ENCODE measurements at regions of chr1 and their contacts with region 1.

Region 1: DNA sequence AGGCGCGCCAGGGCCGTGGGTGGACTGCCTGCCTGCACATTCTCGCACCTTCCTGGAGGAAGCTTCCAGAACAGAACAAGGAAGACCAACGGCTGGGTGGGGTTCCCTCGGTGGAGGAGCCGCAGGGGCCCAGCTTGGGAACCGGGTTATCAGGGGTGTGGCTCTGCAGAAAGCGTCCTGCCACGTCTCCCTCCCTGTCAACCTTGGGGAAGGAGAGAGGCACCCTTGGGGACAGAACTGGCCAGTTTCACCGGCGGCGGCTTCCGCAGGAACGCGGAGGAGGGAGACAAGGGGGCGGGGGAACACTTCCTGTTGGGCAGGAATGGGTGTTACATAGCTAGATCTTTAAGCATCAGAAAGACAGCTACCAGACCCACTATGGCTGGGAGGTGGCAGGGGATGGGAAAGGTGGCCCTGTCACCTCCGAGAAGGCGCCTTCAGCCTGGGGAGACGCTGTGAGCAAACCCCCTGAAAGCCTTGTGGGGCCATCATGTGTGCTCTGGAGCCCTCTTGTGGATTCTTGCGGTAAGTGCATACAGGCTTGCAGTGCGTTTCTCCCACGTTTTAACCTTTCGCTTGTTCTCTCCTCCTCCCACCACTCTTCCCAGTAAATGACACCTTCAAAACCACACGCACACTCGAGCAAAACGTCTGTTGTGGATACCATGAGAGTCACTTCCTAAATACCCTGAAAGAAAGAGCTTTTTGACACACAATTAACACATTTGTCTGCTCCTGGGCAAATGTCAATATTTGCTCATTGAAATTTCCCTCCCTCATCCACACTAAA is 3.8 kb upstream of the PLEKHA6 start:
- DNase-seq: peak; percentile 62
- H3K4me3 Mint-ChIP-seq: peak overlapping the region; percentile 58
- H3K27ac Mint-ChIP-seq: peak overlapping the region; percentile 82
- H3K4me1 Mint-ChIP-seq: peaks cover 40% of the 10 kb centered on the region
- H3K27me3 Mint-ChIP-seq: peaks cover 17% of the 10 kb centered on the region

Region 2: GRCh38 chr1:203861379-203862184 is 501.9 kb before region 1 on chr1 and contains the start of gene SNRPE:
- intact Hi-C with region 1: loop called (anchors 1 kb)
- DNase-seq: peak; percentile 96
- H3K4me3 Mint-ChIP-seq: peak within 1 kb of the TSS; percentile 100
- H3K27ac Mint-ChIP-seq: peak within 1 kb of the TSS; percentile 98
- H3K4me1 Mint-ChIP-seq: peaks cover 25% of the 10 kb centered on the region
- H3K27me3 Mint-ChIP-seq: no peaks in the 10 kb centered on the region
- total RNA-seq, gene SNRPE: 250 and 270 TPM in 2 replicates

Region 3: DNA sequence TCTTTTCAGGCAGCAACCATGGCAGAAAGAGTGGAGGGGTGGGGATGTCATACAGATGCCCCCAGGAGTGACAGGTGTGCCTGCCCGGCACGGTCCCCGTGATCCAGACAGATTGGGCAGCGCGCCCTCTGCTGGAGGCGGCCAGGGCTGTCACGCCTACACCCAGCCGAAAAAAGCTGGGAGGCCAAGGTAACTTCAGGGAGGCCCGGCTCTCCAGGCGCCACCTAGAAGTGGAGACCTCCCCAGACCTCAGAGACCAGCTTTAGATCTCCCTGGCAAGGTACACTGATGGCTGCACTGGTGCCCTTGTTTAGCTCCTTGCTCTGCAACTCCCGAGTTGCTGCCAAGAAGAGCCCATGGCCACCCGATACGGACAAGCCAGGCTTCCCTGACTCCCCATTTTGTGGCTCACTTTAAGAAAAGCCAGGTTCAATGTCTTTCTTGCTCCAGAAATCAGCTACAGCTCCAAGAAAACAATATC is 156.4 kb before region 1 on chr1:
- intact Hi-C with region 1: loop called (anchors 1 kb)
- DNase-seq: peak; percentile 51
- H3K4me3 Mint-ChIP-seq: no peak overlapping the region
- H3K27ac Mint-ChIP-seq: no peak overlapping the region
- H3K4me1 Mint-ChIP-seq: peaks cover 5% of the 10 kb centered on the region
- H3K27me3 Mint-ChIP-seq: peaks cover 41% of the 10 kb centered on the region

Region 4: DNA sequence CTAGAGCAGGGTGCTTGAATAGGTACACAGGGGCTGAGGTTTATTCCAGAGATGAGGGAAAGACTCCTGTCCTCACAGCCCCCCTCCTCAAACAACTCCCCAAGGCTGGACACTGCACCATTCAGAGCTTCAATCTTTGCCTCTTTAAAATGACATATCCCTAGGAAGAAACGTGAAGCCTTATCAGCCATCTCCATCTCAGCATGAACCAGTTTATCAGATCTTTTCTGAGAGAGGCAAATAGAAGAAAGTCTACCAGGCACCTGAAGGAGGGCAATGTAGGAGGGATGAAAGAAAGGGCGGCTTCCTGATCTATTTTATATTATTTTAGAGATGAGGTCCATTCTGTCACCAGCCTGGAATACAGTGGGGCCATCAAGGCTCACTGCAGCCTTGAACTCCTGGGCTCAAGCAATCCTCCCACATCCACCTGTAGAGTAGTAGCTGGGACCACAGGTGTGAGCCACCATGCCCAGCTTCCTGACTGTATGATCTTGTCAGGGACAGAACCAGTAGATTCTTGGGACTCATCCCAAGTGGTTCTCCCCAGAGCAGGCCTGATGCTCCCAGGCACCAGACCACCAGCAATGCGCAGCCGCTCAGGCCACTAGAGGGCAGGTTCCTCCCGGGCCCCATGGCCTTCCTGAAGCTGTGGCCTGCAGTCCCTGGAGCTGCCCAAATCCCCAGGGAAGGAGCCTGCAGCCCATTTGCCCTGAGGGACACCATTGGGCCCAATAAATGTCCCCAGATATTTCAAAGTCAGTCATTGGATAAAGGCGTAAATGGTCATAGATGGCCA is 105.4 kb before region 1 on chr1:
- intact Hi-C with region 1: loop called (anchors 1 kb)
- DNase-seq: no peak
- H3K4me3 Mint-ChIP-seq: no peak overlapping the region
- H3K27ac Mint-ChIP-seq: no peak overlapping the region
- H3K4me1 Mint-ChIP-seq: no peaks in the 10 kb centered on the region
- H3K27me3 Mint-ChIP-seq: peaks cover 5% of the 10 kb centered on the region

Region 5: DNA sequence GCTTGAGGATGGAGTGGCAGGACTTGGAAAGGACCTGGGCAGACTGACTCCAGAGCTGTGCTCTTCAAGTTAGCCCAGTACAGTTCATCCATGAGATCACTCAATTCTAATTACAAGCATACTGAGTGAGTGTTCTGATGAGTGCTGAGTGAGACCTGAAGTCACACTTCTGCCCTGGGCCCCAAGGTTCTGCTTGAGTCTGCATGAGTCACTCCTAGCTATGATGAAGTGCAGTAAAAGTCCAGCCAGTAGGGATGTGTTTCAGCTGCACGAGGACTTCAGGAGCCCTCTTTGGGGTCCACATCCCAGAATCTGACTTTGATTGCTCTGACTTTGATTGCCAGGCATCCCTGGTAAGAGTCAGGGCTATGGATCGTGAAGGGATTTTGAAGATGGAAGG is 39.6 kb before region 1 on chr1:
- intact Hi-C with region 1: loop called (anchors 1 kb)
- DNase-seq: peak; percentile 4
- H3K4me3 Mint-ChIP-seq: peak overlapping the region; percentile 58
- H3K27ac Mint-ChIP-seq: peak overlapping the region; percentile 84
- H3K4me1 Mint-ChIP-seq: peaks cover 34% of the 10 kb centered on the region
- H3K27me3 Mint-ChIP-seq: peaks cover 6% of the 10 kb centered on the region

Region 6: DNA sequence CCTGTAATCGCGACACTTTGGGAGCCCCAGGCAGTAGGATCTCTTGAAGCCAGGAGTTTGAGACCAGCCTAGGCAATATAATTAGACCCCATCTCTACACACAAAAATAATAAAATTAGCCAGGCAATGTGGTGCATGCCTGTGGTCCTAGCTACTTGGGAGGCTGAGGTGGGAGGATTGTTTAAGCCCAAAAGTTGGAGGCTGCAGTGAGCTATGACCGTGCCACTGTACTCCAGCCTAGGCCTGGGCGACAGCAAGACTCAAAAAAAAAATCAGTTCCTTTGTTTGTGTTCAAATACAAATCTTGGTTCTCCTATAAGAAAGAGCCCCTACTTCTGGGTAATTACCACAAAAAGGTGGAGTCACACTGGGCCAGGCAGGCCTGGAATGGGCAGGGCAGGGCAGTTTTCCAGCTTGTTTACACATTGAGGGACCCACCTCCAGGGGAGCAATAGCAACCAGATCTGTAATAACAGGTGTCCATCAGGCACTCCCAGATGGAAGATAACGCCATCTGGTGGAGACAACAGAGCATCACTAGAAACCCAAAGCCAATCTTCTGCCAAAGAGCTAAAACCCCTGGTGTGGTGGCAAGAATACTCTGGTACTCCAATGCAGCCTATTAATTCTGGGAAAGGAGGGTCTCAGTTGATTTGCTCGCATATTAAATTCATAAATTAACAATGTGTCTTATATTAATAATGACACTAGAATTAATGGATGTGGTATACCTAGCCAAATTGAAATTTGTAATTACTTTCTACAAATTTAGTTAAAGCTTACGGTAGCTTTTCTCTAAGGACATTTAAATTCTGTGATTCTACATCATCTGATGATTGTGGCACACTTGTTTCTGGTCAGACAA is 34.9 kb after region 1 on chr1:
- intact Hi-C with region 1: loop called (anchors 1 kb)
- DNase-seq: peak; percentile 30
- H3K4me3 Mint-ChIP-seq: no peak overlapping the region
- H3K27ac Mint-ChIP-seq: peak overlapping the region; percentile 50
- H3K4me1 Mint-ChIP-seq: peaks cover 8% of the 10 kb centered on the region
- H3K27me3 Mint-ChIP-seq: no peaks in the 10 kb centered on the region

Region 7: GRCh38 chr1:204506961-204507387 is 143.4 kb after region 1 on chr1:
- intact Hi-C with region 1: loop called (anchors 2 kb)
- DNase-seq: peak; percentile 87
- H3K4me3 Mint-ChIP-seq: peak overlapping the region; percentile 94
- H3K27ac Mint-ChIP-seq: peak overlapping the region; percentile 98
- H3K4me1 Mint-ChIP-seq: peaks cover 48% of the 10 kb centered on the region
- H3K27me3 Mint-ChIP-seq: peaks cover 6% of the 10 kb centered on the region

Region 8: GRCh38 chr1:205335643-205336091 is 972.1 kb after region 1 on chr1:
- intact Hi-C with region 1: no loop called
- DNase-seq: peak; percentile 65
- H3K4me3 Mint-ChIP-seq: no peak overlapping the region
- H3K27ac Mint-ChIP-seq: no peak overlapping the region
- H3K4me1 Mint-ChIP-seq: peaks cover 5% of the 10 kb centered on the region
- H3K27me3 Mint-ChIP-seq: peaks cover 39% of the 10 kb centered on the region